GM12878 (cell line): ENCODE measurements at regions of chr10 and their contacts with region 1.

Region 1: DNA sequence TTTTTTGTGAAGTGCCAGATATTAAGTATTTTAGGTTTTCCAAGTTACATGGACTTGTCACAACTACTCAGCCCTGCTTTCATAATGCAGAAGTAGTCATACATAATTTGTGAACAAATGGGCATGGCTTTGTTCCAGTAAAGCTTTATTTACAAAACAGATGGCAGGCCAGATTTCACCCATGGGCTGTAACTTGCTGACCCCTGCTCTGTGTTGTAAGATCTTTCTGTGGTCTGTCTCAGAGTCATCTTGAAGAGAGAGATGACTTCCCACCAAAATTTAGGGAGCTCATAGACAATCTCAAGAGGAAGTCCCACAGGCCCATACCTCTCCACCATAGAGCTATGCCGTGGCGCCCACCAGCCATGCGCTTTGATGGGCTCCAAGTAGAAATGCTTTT is 616.1 kb downstream of the LRMDA start:
- DNase-seq: no peak
- ATAC-seq: no peak
- H3K4me3 ChIP-seq: no peak overlapping the region
- H3K27ac ChIP-seq: no peak overlapping the region
- H3K4me1 ChIP-seq: no peaks in the 10 kb centered on the region
- H3K27me3 ChIP-seq: no peaks in the 10 kb centered on the region
- CTCF ChIP-seq: no peak
- EP300 ChIP-seq: no peak
- POLR2A ChIP-seq: no peak
- RAD21 ChIP-seq: no peak

Region 2: DNA sequence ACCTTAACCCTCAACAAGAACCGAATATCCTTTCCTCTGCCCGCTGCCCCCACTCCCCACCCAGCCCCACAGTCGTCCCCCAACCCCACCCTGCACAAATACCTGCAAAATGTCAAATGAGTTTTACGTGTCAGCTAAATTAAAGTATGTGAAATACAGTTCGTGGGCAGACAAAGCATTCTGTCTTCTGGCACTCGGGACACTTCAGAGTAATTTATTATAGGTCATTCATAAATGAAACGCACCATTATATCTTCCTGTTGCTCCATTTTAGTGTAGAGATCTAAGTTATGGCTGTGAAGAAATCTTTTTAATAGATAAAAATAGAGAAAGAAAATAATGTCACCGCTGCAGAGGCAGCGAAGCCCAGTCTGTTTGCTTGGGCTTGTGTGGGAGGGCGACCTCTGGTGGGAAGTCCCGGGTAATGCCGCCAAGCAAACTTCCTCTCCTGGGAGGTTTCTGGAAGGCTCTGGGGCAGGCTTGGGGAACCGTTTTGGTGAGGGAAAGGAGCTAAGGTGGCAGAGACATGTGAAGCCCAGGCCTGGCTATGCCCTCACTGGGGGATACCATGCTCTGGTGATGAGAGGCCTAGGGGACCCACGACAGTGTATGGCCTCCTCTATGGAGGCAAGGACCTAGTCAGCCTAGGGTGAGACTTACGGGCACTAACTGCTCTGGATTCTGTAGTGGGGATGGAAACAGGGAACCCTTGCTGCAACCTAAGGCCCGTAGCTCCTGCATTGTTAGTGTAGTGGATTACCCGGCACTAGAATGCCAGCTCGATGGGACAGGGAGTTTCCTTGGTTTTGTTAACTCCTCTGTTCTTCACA is 11.2 kb before region 1 on chr10:
- CTCF ChIA-PET with region 1: interaction called, 22 read pairs
- POLR2A ChIA-PET with region 1: no interaction called
- RAD21 ChIA-PET with region 1: interaction called, 3 read pairs
- SMC1A ChIA-PET with region 1: no interaction called
- in situ Hi-C with region 1: no loop called
- intact Hi-C with region 1: no loop called
- DNase-seq: no peak
- ATAC-seq: peak; percentile 90
- H3K4me3 ChIP-seq: no peak overlapping the region
- H3K27ac ChIP-seq: no peak overlapping the region
- H3K4me1 ChIP-seq: no peaks in the 10 kb centered on the region
- H3K27me3 ChIP-seq: no peaks in the 10 kb centered on the region
- CTCF ChIP-seq: peak; percentile 86 to 88 (median 87)
- EP300 ChIP-seq: no peak
- POLR2A ChIP-seq: no peak
- RAD21 ChIP-seq: peak; percentile 66